ENCODE measurements at regions of chr6 and their contacts with region 1.

Region 1: GRCh38 chr6:122839477-122839876 is 50.4 kb downstream of the SMPDL3A start:
- DNase-seq: peak; percentile 66
- ATAC-seq: peak; percentile 39
- H3K4me3 Mint-ChIP-seq: no peak overlapping the region
- H3K27ac Mint-ChIP-seq: no peak overlapping the region
- H3K4me1 Mint-ChIP-seq: no peaks in the 10 kb centered on the region
- H3K27me3 Mint-ChIP-seq: peaks cover 5% of the 10 kb centered on the region

Region 2: DNA sequence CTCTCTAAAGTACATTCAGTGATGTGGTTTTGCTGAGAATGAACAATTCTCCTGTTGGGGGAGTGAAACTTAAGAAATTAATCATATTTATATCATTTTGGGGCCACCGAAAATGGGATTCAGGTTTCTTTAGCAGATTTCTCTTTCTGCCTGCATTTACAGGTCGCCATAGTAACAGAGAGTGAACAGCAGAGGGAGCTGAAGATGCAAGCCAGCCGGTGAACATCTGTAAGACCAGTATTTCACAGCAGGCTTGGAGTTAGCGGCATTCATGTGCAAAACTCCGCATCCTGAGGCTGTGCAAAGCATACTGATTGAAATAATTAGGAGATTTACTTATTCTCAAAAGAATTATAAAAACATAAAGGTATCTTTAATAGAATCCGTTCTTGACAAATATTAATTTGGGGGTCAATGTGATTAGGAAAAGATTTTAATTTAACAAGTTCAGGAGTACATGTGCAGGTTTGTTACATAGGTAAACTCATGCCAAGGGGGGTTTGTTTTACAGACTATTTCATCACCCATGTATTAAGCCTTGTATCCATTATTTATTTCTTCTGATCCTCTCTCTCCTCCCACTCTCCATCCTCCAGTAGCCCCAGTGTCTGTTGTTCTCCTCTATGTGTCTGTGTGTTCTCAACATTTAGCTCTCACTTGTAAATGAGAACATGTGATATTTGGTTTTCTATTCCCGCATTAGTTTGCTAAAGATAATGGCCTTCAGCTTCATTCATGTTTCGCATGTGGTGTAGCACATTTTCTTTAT is 457.8 kb before region 1 on chr6:
- CTCF ChIA-PET with region 1: no interaction called
- POLR2A ChIA-PET with region 1: no interaction called
- intact Hi-C with region 1: loop called in 1 of 2 experiments (anchors 5 kb)
- DNase-seq: peak; percentile 74
- ATAC-seq: peak; percentile 99
- H3K4me3 Mint-ChIP-seq: no peak overlapping the region
- H3K27ac Mint-ChIP-seq: no peak overlapping the region
- H3K4me1 Mint-ChIP-seq: peaks cover 6% of the 10 kb centered on the region
- H3K27me3 Mint-ChIP-seq: peaks cover 8% of the 10 kb centered on the region

Region 3: DNA sequence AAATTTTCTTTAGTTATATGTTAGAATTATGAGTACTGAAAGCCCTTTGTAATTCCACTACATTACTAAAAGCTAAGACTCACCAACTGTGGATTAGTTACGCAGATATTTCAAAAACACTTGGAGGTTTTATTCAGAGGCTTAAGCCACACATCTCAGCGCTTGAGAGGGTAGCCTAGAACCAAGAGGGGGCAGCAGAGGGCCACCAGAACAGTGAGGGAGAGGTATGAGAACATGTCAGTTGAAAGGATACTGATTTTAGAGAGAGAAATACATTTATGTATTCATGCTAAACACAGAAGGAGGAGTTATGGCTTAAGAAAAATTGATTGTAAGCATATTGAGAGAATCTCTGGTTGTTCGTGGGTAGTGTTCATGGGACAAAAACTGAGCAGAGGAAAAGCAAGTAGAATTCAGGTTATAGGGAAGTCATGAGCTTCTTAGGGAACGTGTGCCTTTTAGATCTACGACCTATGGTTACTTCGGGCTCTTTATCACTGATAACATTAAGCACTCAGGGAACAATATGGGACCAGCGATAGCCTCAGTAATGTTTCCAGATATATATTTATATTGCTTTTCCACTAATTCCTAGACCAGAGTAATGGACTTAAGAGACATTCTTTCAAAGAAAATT is 347.4 kb before region 1 on chr6:
- CTCF ChIA-PET with region 1: interaction called, 12 read pairs
- POLR2A ChIA-PET with region 1: no interaction called
- intact Hi-C with region 1: loop called (anchors 1 to 2 kb)
- DNase-seq: peak; percentile 83
- ATAC-seq: peak; percentile 100
- H3K4me3 Mint-ChIP-seq: no peak overlapping the region
- H3K27ac Mint-ChIP-seq: no peak overlapping the region
- H3K4me1 Mint-ChIP-seq: peaks cover 5% of the 10 kb centered on the region
- H3K27me3 Mint-ChIP-seq: peaks cover 3% of the 10 kb centered on the region

Region 4: DNA sequence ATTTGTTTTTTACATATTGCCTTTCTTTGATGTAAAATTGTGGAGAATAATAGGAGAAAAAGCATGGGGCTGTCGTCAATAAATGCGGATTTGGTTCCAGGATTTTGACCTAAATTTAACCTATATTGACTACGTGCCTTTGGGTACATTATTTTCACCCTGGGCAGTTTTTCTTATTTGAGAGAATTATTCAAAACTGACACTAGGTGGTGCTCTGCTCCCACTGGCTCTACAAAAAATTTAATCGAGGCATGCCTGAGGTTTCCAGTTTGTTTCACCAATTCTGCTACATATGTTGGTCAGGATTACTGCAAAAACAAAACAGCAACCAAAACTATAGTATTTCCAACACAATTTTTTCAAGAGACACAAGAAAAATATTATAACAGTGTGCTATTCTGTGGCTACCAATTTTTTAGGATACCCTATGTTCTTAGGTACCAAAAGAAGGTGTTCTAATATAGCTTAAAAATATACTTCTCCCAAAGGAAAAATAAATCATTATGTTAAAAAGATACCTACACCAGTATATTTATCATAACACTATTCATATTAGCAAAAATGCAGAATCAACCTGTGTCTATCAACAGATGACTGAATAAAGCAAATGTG is 108.6 kb before region 1 on chr6:
- CTCF ChIA-PET with region 1: interaction called, 85 read pairs
- POLR2A ChIA-PET with region 1: no interaction called
- intact Hi-C with region 1: loop called (anchors 1 kb)
- DNase-seq: peak; percentile 25
- ATAC-seq: no peak
- H3K4me3 Mint-ChIP-seq: no peak overlapping the region
- H3K27ac Mint-ChIP-seq: no peak overlapping the region
- H3K4me1 Mint-ChIP-seq: no peaks in the 10 kb centered on the region
- H3K27me3 Mint-ChIP-seq: peaks cover 2% of the 10 kb centered on the region

Region 5: GRCh38 chr6:122749451-122750050 is 89.9 kb before region 1 on chr6:
- CTCF ChIA-PET with region 1: interaction called, 8 read pairs
- POLR2A ChIA-PET with region 1: no interaction called
- intact Hi-C with region 1: loop called in 1 of 2 experiments (anchors 1 kb)
- DNase-seq: no peak
- ATAC-seq: no peak
- H3K4me3 Mint-ChIP-seq: no peak overlapping the region
- H3K27ac Mint-ChIP-seq: no peak overlapping the region
- H3K4me1 Mint-ChIP-seq: peaks cover 12% of the 10 kb centered on the region
- H3K27me3 Mint-ChIP-seq: no peaks in the 10 kb centered on the region